ENCODE measurements at regions of chr17 and their contacts with region 1.

Region 1: DNA sequence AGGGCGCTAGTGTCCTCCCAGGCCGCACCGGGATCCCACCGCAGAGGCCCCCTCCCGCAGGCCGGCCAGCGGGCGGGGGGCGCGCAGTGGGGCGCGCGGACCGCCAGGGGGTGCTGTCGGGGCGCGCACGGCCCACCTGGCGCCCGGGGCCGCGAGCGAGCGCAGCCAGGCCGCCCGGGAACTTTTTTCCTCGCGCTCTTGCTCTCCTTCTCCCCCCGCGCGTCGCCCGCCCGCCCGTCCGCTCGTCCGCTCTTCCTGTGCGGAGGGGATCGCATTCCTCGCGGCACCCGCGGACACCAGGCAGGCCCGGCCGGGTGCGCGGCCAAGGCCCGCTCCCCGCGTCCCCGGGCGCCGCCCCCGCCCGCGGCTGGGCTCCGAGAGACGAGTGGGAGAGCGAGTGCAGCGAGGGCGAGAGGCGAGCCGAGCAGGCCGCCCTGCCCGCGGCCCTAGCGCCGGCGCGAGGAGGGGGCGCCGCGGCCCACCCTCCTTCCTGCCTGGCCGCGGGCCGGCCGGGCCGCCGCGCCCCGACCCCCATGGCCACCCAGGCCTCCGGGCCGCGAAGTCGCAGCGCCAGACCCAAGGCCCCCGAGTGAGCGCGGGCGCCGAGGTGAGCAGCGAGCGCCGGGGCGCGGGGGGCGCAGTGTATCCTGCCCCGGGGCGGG is at the start of gene RAI1:
- DNase-seq: peak; percentile 71
- H3K4me3 ChIP-seq: peak within 1 kb of the TSS; percentile 72 to 84 (median 84)
- H3K27ac ChIP-seq: peak within 1 kb of the TSS; percentile 78
- H3K4me1 ChIP-seq: peaks cover 50% of the 10 kb centered on the region
- H3K27me3 ChIP-seq: no peaks in the 10 kb centered on the region
- CTCF ChIP-seq: peak; percentile 47 to 55
- total RNA-seq, gene RAI1: 23.8 to 41.9 TPM

Region 2: GRCh38 chr17:17694169-17695081 is 13.1 kb after region 1 on chr17:
- CTCF ChIA-PET with region 1: no interaction called
- dilution Hi-C with region 1: no loop called
- in situ Hi-C with region 1: no loop called
- intact Hi-C with region 1: loop called (anchors 1 kb)
- DNase-seq: peak; percentile 71
- H3K4me3 ChIP-seq: peak overlapping the region; percentile 49 to 63 (median 57)
- H3K27ac ChIP-seq: peak overlapping the region; percentile 84
- H3K4me1 ChIP-seq: peaks cover 87% of the 10 kb centered on the region
- H3K27me3 ChIP-seq: no peaks in the 10 kb centered on the region
- CTCF ChIP-seq: no peak

Region 3: GRCh38 chr17:17719966-17720543 is 38.7 kb after region 1 on chr17:
- CTCF ChIA-PET with region 1: no interaction called
- dilution Hi-C with region 1: no loop called
- in situ Hi-C with region 1: no loop called
- intact Hi-C with region 1: loop called (anchors 2 kb)
- DNase-seq: peak; percentile 45
- H3K4me3 ChIP-seq: no peak overlapping the region
- H3K27ac ChIP-seq: no peak overlapping the region
- H3K4me1 ChIP-seq: peaks cover 20% of the 10 kb centered on the region
- H3K27me3 ChIP-seq: no peaks in the 10 kb centered on the region
- CTCF ChIP-seq: no peak

Region 4: DNA sequence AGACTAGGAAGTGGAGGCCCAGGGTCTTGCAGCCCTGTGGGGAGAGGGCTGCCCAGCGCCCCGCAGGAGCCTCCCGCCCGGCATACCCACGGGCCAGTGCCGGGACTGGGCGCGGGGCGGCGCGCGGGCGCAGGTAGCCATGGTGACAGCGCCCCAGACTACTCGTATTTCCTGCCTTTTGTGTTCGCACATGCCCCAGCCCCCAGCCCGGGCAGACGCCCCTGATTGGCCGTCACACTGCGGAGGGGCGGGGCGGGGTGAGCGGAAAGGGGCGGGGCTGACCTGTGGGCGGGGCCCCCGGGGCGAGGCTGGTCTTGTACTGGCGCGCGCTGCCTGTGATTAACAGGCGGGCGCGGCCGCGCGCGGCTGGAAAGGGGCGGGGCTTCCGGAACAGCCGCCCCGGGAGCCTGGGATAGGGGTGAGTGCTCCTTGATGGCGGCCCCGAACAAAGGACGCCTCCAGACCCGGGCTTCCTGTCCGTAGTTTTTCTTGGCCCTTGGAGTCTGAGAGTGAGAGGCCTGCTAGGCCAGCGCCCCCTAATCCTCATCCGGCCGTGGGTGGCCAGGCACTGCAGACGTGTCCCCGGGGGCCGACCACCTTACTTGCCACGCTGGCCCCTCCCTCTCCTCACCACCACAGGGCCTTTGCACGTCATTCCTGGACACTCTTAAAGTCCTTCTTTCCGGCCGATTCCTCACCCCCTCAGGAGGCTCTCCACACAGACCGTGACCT is 70.9 kb after region 1 on chr17:
- CTCF ChIA-PET with region 1: no interaction called
- dilution Hi-C with region 1: no loop called
- in situ Hi-C with region 1: no loop called
- intact Hi-C with region 1: loop called (anchors 5 kb)
- DNase-seq: peak; percentile 93
- H3K4me3 ChIP-seq: peak overlapping the region; percentile 30 to 53 (median 49)
- H3K27ac ChIP-seq: peak overlapping the region; percentile 82
- H3K4me1 ChIP-seq: peaks cover 58% of the 10 kb centered on the region
- H3K27me3 ChIP-seq: no peaks in the 10 kb centered on the region
- CTCF ChIP-seq: peak; percentile 16 to 32

Region 5: DNA sequence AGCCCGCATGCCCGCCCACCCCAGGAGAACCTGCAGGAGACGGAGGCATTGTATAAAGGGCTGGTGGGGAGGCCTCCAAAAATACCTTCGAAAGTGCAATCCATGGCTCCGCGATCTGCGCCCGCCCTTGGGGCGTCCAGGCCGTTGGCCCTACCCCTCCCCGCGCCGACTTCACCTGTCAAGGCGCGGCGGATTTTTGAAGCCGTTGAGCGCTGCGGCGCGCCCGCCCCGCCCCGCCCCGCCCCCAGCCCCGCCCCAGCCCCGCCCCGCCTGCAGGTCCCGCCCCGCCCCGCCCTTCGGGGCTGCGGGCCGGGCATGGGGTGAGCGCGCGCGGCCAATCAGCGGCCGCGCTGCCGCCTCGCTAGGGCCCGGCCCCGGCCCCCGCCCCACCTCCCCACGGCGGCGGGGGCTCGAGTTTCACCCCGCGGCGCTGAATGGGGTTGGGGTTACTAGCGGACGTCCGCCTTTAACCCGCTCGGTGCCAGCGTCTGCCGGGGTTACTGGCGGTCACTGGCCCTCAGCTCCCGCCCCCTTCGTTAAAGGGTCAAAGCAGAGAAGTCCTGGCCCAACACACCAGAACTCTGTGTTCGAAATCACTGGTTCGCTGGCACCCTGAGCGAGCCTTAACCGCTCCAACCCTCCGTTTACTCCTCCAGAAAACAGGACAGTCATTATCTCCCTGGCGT is 142.3 kb after region 1 on chr17:
- CTCF ChIA-PET with region 1: no interaction called
- dilution Hi-C with region 1: no loop called
- in situ Hi-C with region 1: loop called in 1 of 2 experiments (anchors 25 kb)
- intact Hi-C with region 1: no loop called
- DNase-seq: peak; percentile 86
- H3K4me3 ChIP-seq: peak overlapping the region; percentile 36 to 51 (median 46)
- H3K27ac ChIP-seq: peak overlapping the region; percentile 71
- H3K4me1 ChIP-seq: peaks cover 85% of the 10 kb centered on the region
- H3K27me3 ChIP-seq: no peaks in the 10 kb centered on the region
- CTCF ChIP-seq: no peak

Region 6: DNA sequence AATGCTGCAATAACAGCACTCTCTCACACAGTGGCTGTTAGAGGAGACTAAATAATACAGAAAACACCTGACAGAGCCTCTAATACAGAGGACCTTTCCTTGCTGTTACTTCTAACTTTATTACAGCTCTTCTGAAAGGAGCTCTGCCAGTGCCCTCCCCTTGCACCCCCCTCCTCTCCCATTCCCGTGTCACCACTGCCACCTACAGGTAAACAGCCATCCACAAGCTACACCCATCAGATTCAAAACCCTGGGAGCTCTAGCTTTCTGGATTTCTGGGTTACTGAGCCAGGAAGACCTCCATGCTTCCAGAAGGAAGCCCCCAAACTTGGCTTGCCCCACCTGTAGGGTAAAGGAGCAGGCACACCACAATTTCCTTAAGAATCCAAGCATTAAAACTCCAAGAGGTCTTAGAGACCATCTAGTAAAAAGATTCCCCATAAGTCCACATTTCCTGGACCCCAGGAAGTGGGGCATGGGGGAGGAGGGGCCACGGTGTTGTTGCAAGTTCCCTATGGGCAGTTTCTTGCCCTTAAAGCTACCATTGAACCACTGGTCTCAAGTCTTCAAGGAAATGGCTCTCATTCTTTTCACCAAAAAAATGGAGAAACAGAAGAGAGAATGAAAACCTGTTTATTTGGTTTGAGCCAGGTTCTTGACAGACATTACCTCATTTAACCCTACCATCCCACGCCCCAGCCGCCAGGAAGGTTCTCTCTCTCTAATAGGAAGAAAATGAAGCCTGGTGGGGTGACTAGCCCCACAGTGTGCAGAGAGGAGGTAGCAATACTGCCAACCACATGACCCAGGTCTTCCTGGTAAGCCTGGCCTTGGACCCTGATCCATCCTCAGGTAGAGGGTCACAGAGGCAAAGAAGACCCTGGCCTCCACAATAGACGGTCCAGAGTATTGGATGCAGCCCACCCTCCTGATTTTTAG is 238.1 kb after region 1 on chr17:
- CTCF ChIA-PET with region 1: interaction called, 3 read pairs
- dilution Hi-C with region 1: no loop called
- in situ Hi-C with region 1: no loop called
- intact Hi-C with region 1: loop called (anchors 1 kb)
- DNase-seq: peak; percentile 61
- H3K4me3 ChIP-seq: no peak overlapping the region
- H3K27ac ChIP-seq: peak overlapping the region; percentile 84
- H3K4me1 ChIP-seq: peaks cover 59% of the 10 kb centered on the region
- H3K27me3 ChIP-seq: no peaks in the 10 kb centered on the region
- CTCF ChIP-seq: peak; percentile 88 to 94

Region 7: DNA sequence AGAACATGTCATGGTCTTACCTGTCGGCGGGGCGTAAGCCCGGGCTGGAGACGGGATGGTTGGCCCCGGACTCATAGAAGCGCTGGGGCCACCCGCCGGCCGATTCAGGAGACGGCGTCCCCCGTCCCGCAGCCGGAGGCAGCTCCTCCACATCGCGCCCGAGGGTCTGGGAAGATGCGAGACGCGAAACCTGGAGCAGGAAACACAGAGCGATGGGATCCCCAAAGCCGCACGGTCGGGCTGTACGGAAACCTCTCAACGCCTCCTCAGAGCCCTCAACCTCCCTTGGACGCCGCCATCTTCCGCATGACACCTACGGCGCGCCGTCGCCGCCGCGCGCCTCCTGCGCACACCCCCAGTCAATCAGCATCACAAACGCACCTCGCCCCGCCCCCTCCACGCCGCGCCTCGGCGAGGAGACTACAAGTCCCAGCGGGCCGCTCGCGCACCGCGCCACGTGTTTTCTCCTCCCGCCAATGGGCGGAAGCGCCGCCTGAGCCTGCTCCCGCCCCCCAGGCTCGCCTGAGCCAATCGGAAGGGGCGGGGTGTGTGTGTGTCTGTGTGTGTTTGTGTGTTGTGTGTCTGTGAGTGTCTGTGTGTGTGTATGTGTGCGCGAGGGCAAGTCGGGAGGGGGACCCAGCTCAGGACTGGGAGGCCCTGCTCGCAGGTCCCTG is 357.7 kb after region 1 on chr17 and contains the starts of genes ATPAF2 and GID4:
- CTCF ChIA-PET with region 1: no interaction called
- dilution Hi-C with region 1: no loop called
- in situ Hi-C with region 1: loop called in 1 of 2 experiments (anchors 25 kb)
- intact Hi-C with region 1: no loop called
- DNase-seq: peak; percentile 99
- H3K4me3 ChIP-seq: peak within 1 kb of the TSS; percentile 88 to 90 (median 89)
- H3K27ac ChIP-seq: peak within 1 kb of the TSS; percentile 65
- H3K4me1 ChIP-seq: peaks cover 24% of the 10 kb centered on the region
- H3K27me3 ChIP-seq: no peaks in the 10 kb centered on the region
- CTCF ChIP-seq: peak in 1 of 2 donors; percentile 32
- total RNA-seq, gene ATPAF2: 17.0 to 23.5 TPM
- total RNA-seq, gene GID4: 11.2 to 16.4 TPM

Measured in mammary epithelial cell (primary cell).